CD8-positive, alpha-beta T cell (primary cell): ENCODE measurements at regions of chr6 and their contacts with region 1.

Region 1: GRCh38 chr6:116531675-116532570 is 13.6 kb downstream of the TRAPPC3L start:
- DNase-seq: peak; percentile 19 to 78 (median 62)
- ATAC-seq: peak; percentile 99
- H3K4me3 ChIP-seq: no peak overlapping the region
- H3K4me3 Mint-ChIP-seq: no peak overlapping the region
- H3K27ac ChIP-seq: no peak overlapping the region
- H3K27ac Mint-ChIP-seq: no peak overlapping the region
- H3K4me1 ChIP-seq: no peaks in the 10 kb centered on the region
- H3K4me1 Mint-ChIP-seq: no peaks in the 10 kb centered on the region
- H3K27me3 ChIP-seq: no peaks in the 10 kb centered on the region
- H3K27me3 Mint-ChIP-seq: peaks cover 9% of the 10 kb centered on the region
- CTCF ChIP-seq: peak; percentile 91

Region 2: DNA sequence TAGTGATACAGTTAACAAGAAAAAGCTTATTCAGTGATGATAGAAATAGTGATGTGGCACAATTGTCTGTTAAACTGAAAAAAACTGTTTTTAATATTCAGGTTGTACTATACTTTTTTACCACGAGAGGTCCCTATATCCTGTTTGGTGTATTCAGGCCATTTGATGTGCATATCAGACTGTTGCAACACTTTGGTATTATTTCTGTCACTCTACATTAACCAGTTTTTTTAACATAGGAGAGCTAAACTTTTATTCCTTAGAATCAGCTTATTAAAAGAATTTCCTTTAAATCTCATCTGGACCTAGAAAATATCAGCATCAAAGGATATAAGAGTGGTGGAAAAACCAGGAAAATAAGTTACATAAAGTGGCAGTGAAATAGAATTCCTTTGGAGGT is 314.9 kb before region 1 on chr6:
- CTCF ChIA-PET with region 1: no interaction called
- POLR2A ChIA-PET with region 1: no interaction called
- intact Hi-C with region 1: loop called (anchors 1 to 2 kb)
- DNase-seq: peak in 2 of 9 experiments; percentile 52 to 59
- ATAC-seq: peak; percentile 87
- H3K4me3 ChIP-seq: no peak overlapping the region
- H3K4me3 Mint-ChIP-seq: no peak overlapping the region
- H3K27ac ChIP-seq: no peak overlapping the region
- H3K27ac Mint-ChIP-seq: peak overlapping the region; percentile 27
- H3K4me1 ChIP-seq: no peaks in the 10 kb centered on the region
- H3K4me1 Mint-ChIP-seq: peaks cover 5% of the 10 kb centered on the region
- H3K27me3 ChIP-seq: no peaks in the 10 kb centered on the region
- H3K27me3 Mint-ChIP-seq: no peaks in the 10 kb centered on the region
- CTCF ChIP-seq: peak; percentile 69

Region 3: GRCh38 chr6:116287689-116288282 is 244.1 kb before region 1 on chr6:
- CTCF ChIA-PET with region 1: interaction called, 58 read pairs
- POLR2A ChIA-PET with region 1: no interaction called
- intact Hi-C with region 1: loop called (anchors 1 kb)
- DNase-seq: peak in 2 of 9 experiments; percentile 58 to 71
- ATAC-seq: peak; percentile 97
- H3K4me3 ChIP-seq: no peak overlapping the region
- H3K4me3 Mint-ChIP-seq: no peak overlapping the region
- H3K27ac ChIP-seq: no peak overlapping the region
- H3K27ac Mint-ChIP-seq: no peak overlapping the region
- H3K4me1 ChIP-seq: no peaks in the 10 kb centered on the region
- H3K4me1 Mint-ChIP-seq: peaks cover 2% of the 10 kb centered on the region
- H3K27me3 ChIP-seq: no peaks in the 10 kb centered on the region
- H3K27me3 Mint-ChIP-seq: no peaks in the 10 kb centered on the region
- CTCF ChIP-seq: peak; percentile 99

Region 4: GRCh38 chr6:116492331-116493067 is 39.4 kb before region 1 on chr6:
- CTCF ChIA-PET with region 1: no interaction called
- POLR2A ChIA-PET with region 1: no interaction called
- intact Hi-C with region 1: no loop called
- DNase-seq: peak in 1 of 9 experiments; percentile 4
- ATAC-seq: no peak
- H3K4me3 ChIP-seq: no peak overlapping the region
- H3K4me3 Mint-ChIP-seq: no peak overlapping the region
- H3K27ac ChIP-seq: no peak overlapping the region
- H3K27ac Mint-ChIP-seq: no peak overlapping the region
- H3K4me1 ChIP-seq: no peaks in the 10 kb centered on the region
- H3K4me1 Mint-ChIP-seq: no peaks in the 10 kb centered on the region
- H3K27me3 ChIP-seq: no peaks in the 10 kb centered on the region
- H3K27me3 Mint-ChIP-seq: peaks cover 5% of the 10 kb centered on the region
- CTCF ChIP-seq: no peak

Region 5: GRCh38 chr6:116542426-116542825 is 10.5 kb after region 1 on chr6:
- CTCF ChIA-PET with region 1: interaction called, 19 read pairs
- POLR2A ChIA-PET with region 1: no interaction called
- intact Hi-C with region 1: no loop called
- DNase-seq: no peak
- ATAC-seq: no peak
- H3K4me3 ChIP-seq: no peak overlapping the region
- H3K4me3 Mint-ChIP-seq: no peak overlapping the region
- H3K27ac ChIP-seq: no peak overlapping the region
- H3K27ac Mint-ChIP-seq: no peak overlapping the region
- H3K4me1 ChIP-seq: no peaks in the 10 kb centered on the region
- H3K4me1 Mint-ChIP-seq: no peaks in the 10 kb centered on the region
- H3K27me3 ChIP-seq: peaks cover 0 to 2% of the 10 kb centered on the region in 2 experiments
- H3K27me3 Mint-ChIP-seq: peaks cover 16% of the 10 kb centered on the region
- CTCF ChIP-seq: no peak

Region 6: GRCh38 chr6:116648156-116648555 is 116.2 kb after region 1 on chr6:
- CTCF ChIA-PET with region 1: interaction called, 7 read pairs
- POLR2A ChIA-PET with region 1: no interaction called
- intact Hi-C with region 1: loop called in 1 of 2 experiments (anchors 1 kb)
- DNase-seq: no peak
- ATAC-seq: no peak
- H3K4me3 ChIP-seq: no peak overlapping the region
- H3K4me3 Mint-ChIP-seq: no peak overlapping the region
- H3K27ac ChIP-seq: no peak overlapping the region
- H3K27ac Mint-ChIP-seq: no peak overlapping the region
- H3K4me1 ChIP-seq: no peaks in the 10 kb centered on the region
- H3K4me1 Mint-ChIP-seq: no peaks in the 10 kb centered on the region
- H3K27me3 ChIP-seq: no peaks in the 10 kb centered on the region
- H3K27me3 Mint-ChIP-seq: no peaks in the 10 kb centered on the region
- CTCF ChIP-seq: no peak